HCT116 (cell line): ENCODE measurements at regions of chr3 and their contacts with region 1.

Region 1: GRCh38 chr3:132399054-132399929 is 18.0 kb upstream of the DNAJC13 start:
- DNase-seq: peak; percentile 48
- ATAC-seq: peak; percentile 91
- H3K4me3 ChIP-seq: no peak overlapping the region
- H3K27ac ChIP-seq: no peak overlapping the region
- H3K4me1 ChIP-seq: no peaks in the 10 kb centered on the region; a peak in 1 of 4 replicates
- H3K27me3 ChIP-seq: peaks cover 8% of the 10 kb centered on the region; the same call in 1 of the 2 replicates
- CTCF ChIP-seq: peak; percentile 72 to 89 (median 86)
- POLR2A ChIP-seq: no peak
- RAD21 ChIP-seq: peak; percentile 94

Region 2: DNA sequence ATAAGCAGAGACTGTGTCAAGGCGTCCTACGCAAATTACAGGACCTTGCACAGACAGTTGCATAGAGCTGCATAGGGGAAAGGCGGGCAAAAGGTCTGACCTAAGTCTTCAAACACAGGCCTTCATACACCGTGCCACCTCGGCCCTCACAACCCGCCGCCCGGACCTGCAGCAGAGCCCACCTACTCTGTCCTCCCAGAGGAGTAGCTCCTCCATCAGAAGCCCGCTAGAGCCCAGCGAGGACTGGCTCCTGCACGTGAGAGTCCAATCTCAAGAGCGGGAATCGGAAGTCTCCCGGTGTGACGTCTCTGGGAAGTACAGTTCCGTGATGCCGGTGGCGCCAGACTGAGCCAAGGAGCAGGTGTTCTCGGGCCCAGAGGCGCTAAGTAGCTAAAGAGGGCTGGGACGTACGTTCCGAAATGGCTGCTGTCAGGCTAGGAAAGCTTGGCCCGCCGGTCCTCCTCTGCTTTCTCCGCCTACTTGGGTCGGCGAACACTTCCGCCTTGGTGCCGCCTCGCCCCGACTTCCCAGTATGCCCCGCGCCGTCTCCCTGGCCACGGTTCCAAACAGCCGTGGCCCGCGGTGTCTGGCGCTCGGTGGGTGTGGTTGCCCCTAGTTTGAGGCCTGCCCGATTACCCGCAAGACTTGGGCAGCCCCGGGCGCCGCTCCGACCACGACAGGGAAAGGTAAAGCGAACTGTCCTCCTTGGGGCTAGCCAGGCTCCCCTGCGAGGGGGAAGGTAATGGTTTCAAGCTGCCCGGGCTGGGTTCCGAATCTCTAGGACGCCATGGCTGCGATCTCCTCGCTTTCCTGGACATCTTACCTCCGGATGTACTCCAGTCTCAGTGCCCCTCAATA is 1372.7 kb before region 1 on chr3 and contains the starts of genes ASTE1 and NEK11:
- CTCF ChIA-PET with region 1: no interaction called
- POLR2A ChIA-PET with region 1: no interaction called
- RAD21 ChIA-PET with region 1: no interaction called
- intact Hi-C with region 1: loop called (anchors 10 kb)
- DNase-seq: peak; percentile 49
- ATAC-seq: peak; percentile 95
- H3K4me3 ChIP-seq: peak within 1 kb of the TSS; percentile 59 to 64
- H3K27ac ChIP-seq: peak within 1 kb of the TSS; percentile 64
- H3K4me1 ChIP-seq: peaks cover 11 to 16% of the 10 kb centered on the region in 2 experiments; a peak in 3 of 4 replicates
- H3K27me3 ChIP-seq: no peaks in the 10 kb centered on the region
- CTCF ChIP-seq: no peak
- POLR2A ChIP-seq: peak; percentile 36
- RAD21 ChIP-seq: no peak
- total RNA-seq, gene ASTE1: 2.4 TPM
- total RNA-seq, gene NEK11: 3.1 TPM

Region 3: DNA sequence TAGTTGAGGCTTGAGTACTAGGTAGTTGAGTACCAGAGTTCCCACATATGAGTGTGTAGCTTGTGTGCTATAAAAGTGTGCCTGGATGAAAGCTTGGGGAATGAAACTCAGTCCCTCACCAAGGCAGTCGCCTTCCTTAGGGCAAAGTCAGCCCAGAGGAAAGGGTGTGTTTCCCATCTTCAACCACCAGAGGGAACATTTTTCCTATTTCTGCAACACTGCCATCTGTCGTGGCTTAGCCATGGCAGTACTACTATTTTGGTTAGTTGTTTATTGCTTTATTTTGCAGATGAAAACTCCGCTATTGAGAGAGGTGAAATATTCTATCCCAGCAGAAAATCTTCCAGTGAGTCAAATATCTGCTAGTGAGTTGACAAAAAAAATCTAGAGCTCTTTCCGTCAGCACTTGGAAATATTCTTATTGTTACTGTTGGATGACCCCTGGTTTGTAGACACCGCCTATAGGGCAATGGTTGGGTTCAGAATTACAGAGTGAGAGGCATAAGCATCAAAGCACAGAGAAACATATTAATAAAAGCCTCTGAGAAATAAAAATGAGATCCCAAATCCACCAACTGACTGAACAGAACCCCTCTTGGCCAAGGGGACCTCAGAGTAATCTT is 604.4 kb before region 1 on chr3:
- CTCF ChIA-PET with region 1: no interaction called
- POLR2A ChIA-PET with region 1: no interaction called
- RAD21 ChIA-PET with region 1: no interaction called
- intact Hi-C with region 1: loop called (anchors 2 kb)
- DNase-seq: peak; percentile 39
- ATAC-seq: peak; percentile 93
- H3K4me3 ChIP-seq: no peak overlapping the region
- H3K27ac ChIP-seq: no peak overlapping the region
- H3K4me1 ChIP-seq: no peaks in the 10 kb centered on the region
- H3K27me3 ChIP-seq: peaks cover 12% of the 10 kb centered on the region; the same call in 1 of the 2 replicates
- CTCF ChIP-seq: peak; percentile 78 to 97 (median 83)
- POLR2A ChIP-seq: no peak
- RAD21 ChIP-seq: peak; percentile 69

Region 4: GRCh38 chr3:132034486-132035464 is 364.5 kb before region 1 on chr3 and contains the start of gene CPNE4:
- CTCF ChIA-PET with region 1: interaction called, 9 read pairs
- POLR2A ChIA-PET with region 1: no interaction called
- RAD21 ChIA-PET with region 1: no interaction called
- intact Hi-C with region 1: loop called (anchors 5 kb)
- DNase-seq: peak; percentile 33
- ATAC-seq: peak; percentile 100
- H3K4me3 ChIP-seq: no peak within 1 kb of the TSS
- H3K27ac ChIP-seq: no peak within 1 kb of the TSS
- H3K4me1 ChIP-seq: no peaks in the 10 kb centered on the region
- H3K27me3 ChIP-seq: peaks cover 21% of the 10 kb centered on the region
- CTCF ChIP-seq: peak; percentile 58 to 90 (median 73); a peak in 5 of 6 replicates
- POLR2A ChIP-seq: no peak
- RAD21 ChIP-seq: peak; percentile 56
- total RNA-seq, gene CPNE4: not detected

Region 5: DNA sequence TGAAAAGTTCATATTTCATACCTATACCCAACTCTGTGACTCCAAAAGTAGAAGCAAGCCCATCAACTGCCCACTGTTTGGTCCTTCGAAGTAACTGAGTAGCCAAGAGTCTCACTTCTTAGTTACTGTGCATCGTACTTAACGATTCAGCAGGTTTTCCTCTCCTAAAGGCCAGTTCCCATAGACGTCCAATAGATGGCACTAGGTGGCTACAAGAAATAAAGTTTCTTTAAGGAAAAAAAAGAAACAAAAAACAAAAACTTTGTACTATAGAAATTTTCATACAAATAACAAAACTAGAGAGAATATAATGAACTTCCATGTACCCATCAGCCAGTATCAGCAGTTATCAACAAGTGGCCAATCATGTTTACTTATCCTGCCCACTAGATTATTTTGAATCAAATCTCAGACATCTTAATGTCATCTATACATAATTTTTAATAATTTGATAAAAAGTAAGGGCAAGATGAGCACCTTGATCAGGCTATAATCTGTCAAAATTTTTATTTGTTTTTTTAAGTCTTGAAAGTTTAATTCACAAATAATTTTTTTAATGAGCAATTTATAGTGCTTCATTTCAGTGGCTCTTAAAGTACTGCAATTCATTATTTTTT is 145.9 kb before region 1 on chr3:
- CTCF ChIA-PET with region 1: interaction called, 36 read pairs
- POLR2A ChIA-PET with region 1: no interaction called
- RAD21 ChIA-PET with region 1: no interaction called
- intact Hi-C with region 1: loop called (anchors 1 kb)
- DNase-seq: peak; percentile 56
- ATAC-seq: peak; percentile 87
- H3K4me3 ChIP-seq: no peak overlapping the region
- H3K27ac ChIP-seq: no peak overlapping the region
- H3K4me1 ChIP-seq: no peaks in the 10 kb centered on the region
- H3K27me3 ChIP-seq: no peaks in the 10 kb centered on the region
- CTCF ChIP-seq: peak; percentile 69 to 74 (median 73); a peak in 5 of 6 replicates
- POLR2A ChIP-seq: no peak
- RAD21 ChIP-seq: peak; percentile 70

Region 6: DNA sequence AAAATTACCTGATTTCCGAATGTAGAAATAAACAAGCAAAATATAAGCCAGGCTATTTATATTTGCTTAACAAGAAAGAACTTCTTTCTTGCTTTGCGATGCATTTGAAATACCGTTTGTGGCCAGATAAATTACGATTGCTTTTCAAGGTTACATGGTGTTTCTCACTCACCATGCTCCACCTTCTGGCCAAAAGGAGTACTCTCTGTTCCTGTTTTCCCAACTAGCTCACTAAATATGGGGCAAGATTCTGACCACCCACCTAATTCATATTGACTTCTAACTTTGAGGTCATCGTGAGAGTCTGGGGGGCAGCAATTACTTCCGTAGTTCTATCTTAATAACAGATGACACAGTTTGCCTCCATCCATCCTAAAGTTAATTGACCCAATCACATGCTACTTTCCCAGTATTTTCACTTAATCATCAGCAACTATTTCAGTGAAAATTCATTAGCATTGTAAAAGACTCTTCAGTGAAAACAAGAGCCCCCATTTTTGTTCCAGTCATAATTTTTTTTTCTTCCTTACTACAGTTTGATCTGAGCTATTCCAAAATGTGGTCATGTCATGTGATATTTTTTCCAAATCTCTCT is 56.2 kb before region 1 on chr3:
- CTCF ChIA-PET with region 1: interaction called, 58 read pairs
- POLR2A ChIA-PET with region 1: no interaction called
- RAD21 ChIA-PET with region 1: no interaction called
- intact Hi-C with region 1: no loop called
- DNase-seq: peak; percentile 50
- ATAC-seq: peak; percentile 90
- H3K4me3 ChIP-seq: no peak overlapping the region
- H3K27ac ChIP-seq: no peak overlapping the region
- H3K4me1 ChIP-seq: peaks cover 0 to 8% of the 10 kb centered on the region in 2 experiments; a peak in 3 of 4 replicates
- H3K27me3 ChIP-seq: no peaks in the 10 kb centered on the region
- CTCF ChIP-seq: peak; percentile 78 to 87 (median 85)
- POLR2A ChIP-seq: no peak
- RAD21 ChIP-seq: peak; percentile 83

Region 7: GRCh38 chr3:132352541-132353143 is 46.6 kb before region 1 on chr3:
- CTCF ChIA-PET with region 1: interaction called, 58 read pairs
- POLR2A ChIA-PET with region 1: no interaction called
- RAD21 ChIA-PET with region 1: interaction called in 1 of 2 experiments, 10 read pairs
- intact Hi-C with region 1: loop called (anchors 1 kb)
- DNase-seq: peak; percentile 61
- ATAC-seq: peak; percentile 97
- H3K4me3 ChIP-seq: no peak overlapping the region
- H3K27ac ChIP-seq: no peak overlapping the region
- H3K4me1 ChIP-seq: no peaks in the 10 kb centered on the region
- H3K27me3 ChIP-seq: no peaks in the 10 kb centered on the region
- CTCF ChIP-seq: peak; percentile 72 to 94 (median 85)
- POLR2A ChIP-seq: no peak
- RAD21 ChIP-seq: peak; percentile 86

Region 8: DNA sequence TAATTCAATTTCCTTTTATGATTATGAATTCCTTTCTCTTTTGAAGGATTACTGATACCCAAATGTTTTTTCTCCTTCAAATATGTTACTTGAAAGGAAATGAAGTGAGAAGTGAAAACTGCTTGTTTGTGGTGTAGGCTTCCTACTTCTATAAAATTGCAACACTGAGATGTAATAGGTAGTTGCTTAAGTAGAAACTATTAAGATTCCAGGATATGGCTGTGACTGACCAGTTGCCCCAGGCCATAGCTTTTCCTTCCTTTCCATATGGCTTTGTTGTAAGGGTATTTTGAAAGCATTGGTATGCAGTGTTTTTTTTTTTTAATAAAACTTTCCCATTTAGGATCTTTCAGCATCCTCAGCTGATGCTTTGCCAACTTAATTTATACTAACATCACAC is 46.5 kb after region 1 on chr3:
- CTCF ChIA-PET with region 1: no interaction called
- POLR2A ChIA-PET with region 1: no interaction called
- RAD21 ChIA-PET with region 1: no interaction called
- intact Hi-C with region 1: no loop called
- DNase-seq: no peak
- ATAC-seq: no peak
- H3K4me3 ChIP-seq: no peak overlapping the region
- H3K27ac ChIP-seq: no peak overlapping the region
- H3K4me1 ChIP-seq: no peaks in the 10 kb centered on the region
- H3K27me3 ChIP-seq: no peaks in the 10 kb centered on the region
- CTCF ChIP-seq: no peak
- POLR2A ChIP-seq: no peak
- RAD21 ChIP-seq: no peak